OCI-LY7 (cell line): ENCODE measurements at regions of chr16 and their contacts with region 1.

Region 1: GRCh38 chr16:87227296-87227951 is 89.8 kb downstream of the C16orf95 start:
- DNase-seq: no peak
- H3K4me3 ChIP-seq: no peak overlapping the region
- H3K27ac ChIP-seq: no peak overlapping the region
- H3K4me1 ChIP-seq: no peaks in the 10 kb centered on the region
- CTCF ChIP-seq: no peak

Region 2: GRCh38 chr16:87305505-87306391 is 78.3 kb after region 1 on chr16:
- CTCF ChIA-PET with region 1: no interaction called
- POLR2A ChIA-PET with region 1: no interaction called
- intact Hi-C with region 1: no loop called
- DNase-seq: no peak
- H3K4me3 ChIP-seq: no peak overlapping the region
- H3K27ac ChIP-seq: no peak overlapping the region
- H3K4me1 ChIP-seq: peaks cover 19% of the 10 kb centered on the region
- CTCF ChIP-seq: no peak

Region 3: DNA sequence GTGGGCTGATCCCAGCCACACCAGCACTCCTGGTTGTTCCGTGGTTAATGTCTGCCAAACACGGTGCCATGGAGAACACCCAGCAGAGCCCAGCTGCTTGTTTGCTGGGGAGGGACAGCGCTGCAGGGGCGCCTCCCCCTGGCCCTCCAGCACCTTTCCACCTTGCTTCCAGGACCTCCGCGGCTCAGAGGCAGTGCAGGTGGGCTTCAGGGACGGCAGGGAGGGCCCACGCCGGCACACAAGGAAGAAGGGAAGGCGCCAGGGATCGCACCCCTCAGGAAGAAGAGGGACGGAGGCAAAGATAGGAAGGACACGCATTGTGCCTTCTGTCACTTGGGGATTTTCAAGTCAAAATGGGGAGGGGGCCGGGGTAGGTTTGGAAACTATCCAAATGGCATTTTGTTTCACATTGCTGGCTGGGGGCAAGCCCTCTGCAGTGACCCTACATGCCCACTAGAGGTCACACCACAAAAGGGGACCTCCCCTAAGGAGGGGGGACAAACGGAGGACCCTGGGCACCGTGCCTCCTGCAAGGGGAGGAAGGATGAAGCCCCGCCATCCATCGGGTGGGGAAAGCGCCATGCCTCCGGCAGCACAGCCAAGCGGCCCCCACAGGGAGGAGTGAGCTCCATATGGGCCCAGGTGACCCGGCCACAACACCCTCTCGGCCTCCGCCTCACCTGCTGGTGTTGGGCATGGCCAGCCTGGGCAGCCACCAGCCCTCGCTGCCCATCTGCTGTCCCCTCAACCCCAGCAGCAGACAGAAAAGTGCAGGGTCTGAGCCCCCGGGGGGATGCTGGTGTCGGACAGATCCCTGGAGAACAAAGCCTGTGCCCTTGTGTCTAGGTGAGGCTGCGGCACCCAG is 97.2 kb after region 1 on chr16:
- CTCF ChIA-PET with region 1: no interaction called
- POLR2A ChIA-PET with region 1: no interaction called
- intact Hi-C with region 1: no loop called
- DNase-seq: peak; percentile 62
- H3K4me3 ChIP-seq: no peak overlapping the region
- H3K27ac ChIP-seq: no peak overlapping the region
- H3K4me1 ChIP-seq: peaks cover 10% of the 10 kb centered on the region
- CTCF ChIP-seq: peak; percentile 81

Region 4: GRCh38 chr16:88856828-88857733 is 1629.7 kb after region 1 on chr16 and contains the starts of genes GALNS and TRAPPC2L:
- CTCF ChIA-PET with region 1: no interaction called
- POLR2A ChIA-PET with region 1: interaction called, 15 read pairs
- intact Hi-C with region 1: no loop called
- DNase-seq: peak; percentile 99
- H3K4me3 ChIP-seq: peak within 1 kb of the TSS; percentile 83
- H3K27ac ChIP-seq: peak within 1 kb of the TSS; percentile 6
- H3K4me1 ChIP-seq: peaks cover 25% of the 10 kb centered on the region
- CTCF ChIP-seq: no peak
- total RNA-seq, gene GALNS: 17.2 and 18.5 TPM in 2 replicates
- total RNA-seq, gene TRAPPC2L: 27.3 and 27.6 TPM in 2 replicates